Activated CD8-positive, alpha-beta T cell treated with anti-CD3 and anti-CD28 coated beads, Interleukin-2, amount 10 ng/mL, durations not matched to agents 7 days and 5 days (primary cell): ENCODE measurements at regions of chr2 and their contacts with region 1.

Region 1: GRCh38 chr2:68441179-68441993 is 25.7 kb downstream of the FBXO48 start:
- DNase-seq: peak; percentile 91
- ATAC-seq: peak; percentile 95
- H3K4me3 Mint-ChIP-seq: no peak overlapping the region
- H3K27ac Mint-ChIP-seq: peak overlapping the region; percentile 18
- H3K4me1 Mint-ChIP-seq: peaks cover 10% of the 10 kb centered on the region
- H3K27me3 Mint-ChIP-seq: peaks cover 10% of the 10 kb centered on the region

Region 2: DNA sequence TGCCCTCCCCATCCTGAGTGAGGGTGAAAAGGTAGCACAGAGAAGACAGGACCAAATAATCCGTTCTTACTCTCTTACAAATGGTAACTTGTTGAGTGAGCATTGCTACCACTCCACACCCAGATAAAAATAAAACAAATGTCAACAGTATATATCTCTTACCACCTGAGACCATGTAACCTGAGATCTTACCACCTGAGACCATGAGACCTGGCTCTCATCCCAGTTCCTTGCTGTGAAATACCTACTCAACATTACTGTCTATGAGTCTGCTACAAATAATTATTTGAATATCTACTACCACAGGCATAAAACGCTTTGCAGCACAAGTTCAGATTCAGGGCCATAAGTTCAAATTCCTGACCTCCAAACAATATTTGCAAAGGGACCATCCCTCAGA is 613.3 kb before region 1 on chr2:
- CTCF ChIA-PET with region 1: no interaction called
- POLR2A ChIA-PET with region 1: no interaction called
- DNase-seq: no peak
- ATAC-seq: no peak
- H3K4me3 Mint-ChIP-seq: no peak overlapping the region
- H3K27ac Mint-ChIP-seq: no peak overlapping the region
- H3K4me1 Mint-ChIP-seq: no peaks in the 10 kb centered on the region
- H3K27me3 Mint-ChIP-seq: no peaks in the 10 kb centered on the region

Region 3: DNA sequence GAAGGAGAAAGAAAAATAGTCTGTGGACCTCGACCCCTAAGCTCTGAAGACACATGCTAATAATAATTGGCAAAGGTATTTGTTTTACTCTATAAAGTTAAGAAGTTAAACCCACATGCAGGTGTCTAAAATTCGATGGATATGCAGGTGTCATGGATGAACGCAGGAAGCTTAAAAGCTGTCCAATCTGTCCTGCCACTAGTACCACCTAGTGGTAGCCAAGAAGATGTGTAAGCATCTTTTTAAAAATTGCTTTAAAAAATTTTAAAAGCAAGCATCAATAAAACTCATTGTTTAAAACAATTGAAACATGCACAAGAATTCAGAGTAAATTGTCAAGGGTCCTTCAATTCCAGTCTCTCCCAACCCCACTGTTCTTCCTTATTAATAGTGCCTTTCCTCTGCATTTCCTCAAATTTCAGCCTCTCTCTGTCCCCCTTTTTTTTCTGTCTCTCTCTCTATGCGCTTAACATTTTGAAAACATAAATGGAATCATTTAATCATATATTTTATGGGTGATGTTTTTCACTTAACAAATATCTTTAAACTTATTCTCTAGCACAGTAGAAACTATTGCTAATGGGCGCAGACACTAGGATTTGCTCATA is 158.5 kb before region 1 on chr2:
- CTCF ChIA-PET with region 1: interaction called, 17 read pairs
- POLR2A ChIA-PET with region 1: no interaction called
- DNase-seq: peak; percentile 27
- ATAC-seq: no peak
- H3K4me3 Mint-ChIP-seq: no peak overlapping the region
- H3K27ac Mint-ChIP-seq: no peak overlapping the region
- H3K4me1 Mint-ChIP-seq: no peaks in the 10 kb centered on the region
- H3K27me3 Mint-ChIP-seq: peaks cover 52% of the 10 kb centered on the region

Region 4: DNA sequence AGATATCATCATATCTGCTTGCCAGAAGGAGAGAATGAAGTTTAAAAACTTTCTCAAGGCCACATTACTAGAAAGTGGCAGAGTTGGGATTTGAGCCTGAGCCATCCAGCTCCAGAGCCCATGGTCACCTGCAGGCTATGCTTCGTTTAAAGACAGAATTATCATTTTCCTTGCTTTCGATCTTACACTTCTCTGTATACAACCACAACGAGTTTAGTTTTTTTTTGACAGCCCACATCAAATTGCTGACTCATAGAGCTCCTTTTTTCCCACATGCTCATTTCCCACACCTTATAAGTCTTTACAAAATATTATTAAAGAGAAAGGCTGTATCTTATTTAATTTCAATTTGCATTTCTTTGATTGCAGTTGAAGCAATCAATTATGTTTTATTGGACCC is 69.8 kb before region 1 on chr2:
- CTCF ChIA-PET with region 1: interaction called, 25 read pairs
- POLR2A ChIA-PET with region 1: interaction called, 6 read pairs
- DNase-seq: no peak
- ATAC-seq: peak; percentile 42
- H3K4me3 Mint-ChIP-seq: no peak overlapping the region
- H3K27ac Mint-ChIP-seq: no peak overlapping the region
- H3K4me1 Mint-ChIP-seq: peaks cover 8% of the 10 kb centered on the region
- H3K27me3 Mint-ChIP-seq: peaks cover 3% of the 10 kb centered on the region

Region 5: GRCh38 chr2:68418855-68419254 is 22.5 kb before region 1 on chr2:
- CTCF ChIA-PET with region 1: interaction called, 11 read pairs
- POLR2A ChIA-PET with region 1: no interaction called
- DNase-seq: no peak
- ATAC-seq: no peak
- H3K4me3 Mint-ChIP-seq: no peak overlapping the region
- H3K27ac Mint-ChIP-seq: no peak overlapping the region
- H3K4me1 Mint-ChIP-seq: peaks cover 14% of the 10 kb centered on the region
- H3K27me3 Mint-ChIP-seq: no peaks in the 10 kb centered on the region

Region 6: DNA sequence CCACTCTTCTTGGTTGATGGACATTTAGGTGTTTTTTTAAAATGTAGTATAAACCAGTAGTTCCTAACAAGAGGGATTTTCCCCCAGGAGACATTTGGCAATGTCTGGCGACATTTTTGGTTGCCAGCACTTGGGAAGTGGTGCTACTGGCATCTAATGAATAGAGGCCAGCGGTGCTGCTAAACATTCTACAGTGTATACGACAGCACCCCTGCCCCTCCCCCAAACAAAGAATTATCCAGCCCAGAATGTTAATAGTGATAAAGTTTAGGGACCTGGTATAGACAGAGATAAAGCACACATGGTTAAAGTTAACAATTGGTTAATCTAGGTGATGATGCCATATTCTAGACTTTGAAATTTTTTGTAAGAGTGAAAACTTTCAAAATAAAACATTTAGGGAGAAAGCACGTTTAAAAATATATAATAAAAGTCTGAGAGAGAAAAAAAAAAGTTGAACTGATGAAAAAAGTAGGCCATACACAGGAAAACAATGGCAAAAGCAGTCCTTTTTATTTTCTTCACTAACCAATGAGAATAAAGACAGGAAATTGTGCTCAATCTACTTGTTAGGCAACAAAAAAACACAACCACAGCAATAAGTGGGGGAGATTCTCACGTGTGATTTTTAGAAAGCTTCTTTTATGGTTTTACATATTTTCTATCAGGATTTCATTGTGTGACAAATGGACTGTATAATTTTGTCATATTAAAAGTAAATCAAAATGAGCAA is 10.9 kb after region 1 on chr2:
- CTCF ChIA-PET with region 1: interaction called, 20 read pairs
- POLR2A ChIA-PET with region 1: no interaction called
- DNase-seq: no peak
- ATAC-seq: no peak
- H3K4me3 Mint-ChIP-seq: no peak overlapping the region
- H3K27ac Mint-ChIP-seq: no peak overlapping the region
- H3K4me1 Mint-ChIP-seq: peaks cover 5% of the 10 kb centered on the region
- H3K27me3 Mint-ChIP-seq: no peaks in the 10 kb centered on the region